ENCODE measurements at regions of chr15 and their contacts with region 1.

Region 1: GRCh38 chr15:65377104-65377975 is 462 bp downstream of the IGDCC3 start:
- DNase-seq: peak; percentile 47 to 61
- ATAC-seq: peak; percentile 61 to 79
- H3K4me3 ChIP-seq: peak overlapping the region; percentile 62
- H3K27ac ChIP-seq: peak overlapping the region; percentile 7 to 83; a peak in 5 of 6 replicates
- H3K4me1 ChIP-seq: peaks cover 10% of the 10 kb centered on the region; the same call in 2 of the 3 replicates
- CTCF ChIP-seq: no peak
- EP300 ChIP-seq: no peak
- POLR2A ChIP-seq: no peak
- RAD21 ChIP-seq: no peak

Region 2: GRCh38 chr15:65304389-65305144 is 72.8 kb before region 1 on chr15 and contains the start of gene RNU5B-1:
- CTCF ChIA-PET with region 1: interaction called, 5 read pairs
- POLR2A ChIA-PET with region 1: interaction called, 13 read pairs
- DNase-seq: peak; percentile 84 to 98
- ATAC-seq: peak; percentile 83 to 86
- H3K4me3 ChIP-seq: peak within 1 kb of the TSS; percentile 56
- H3K27ac ChIP-seq: peak within 1 kb of the TSS; percentile 85 to 91
- H3K4me1 ChIP-seq: peaks cover 23% of the 10 kb centered on the region
- CTCF ChIP-seq: no peak; the same call in 1 of the 3 replicates
- EP300 ChIP-seq: peak in 1 of 2 experiments; percentile 44; a peak in 1 of 5 replicates
- POLR2A ChIP-seq: peak; percentile 100
- RAD21 ChIP-seq: 0 out of 5 replicates have a peak, but pooled peaks of 1 of the 2 experiments have one; percentile 13
- polyA plus RNA-seq, gene RNU5B-1: not detected in 2 replicates

Measured in A549 (cell line).